ENCODE measurements at regions of chr1 and their contacts with region 1.

Region 1: GRCh38 chr1:174999216-174999925 is 376 bp upstream of the CACYBP start:
- DNase-seq: peak; percentile 100
- H3K4me3 Mint-ChIP-seq: no peak overlapping the region
- H3K27ac Mint-ChIP-seq: no peak overlapping the region
- H3K4me1 Mint-ChIP-seq: peaks cover 41% of the 10 kb centered on the region
- H3K27me3 Mint-ChIP-seq: no peaks in the 10 kb centered on the region
- CTCF ChIP-seq: no peak

Region 2: DNA sequence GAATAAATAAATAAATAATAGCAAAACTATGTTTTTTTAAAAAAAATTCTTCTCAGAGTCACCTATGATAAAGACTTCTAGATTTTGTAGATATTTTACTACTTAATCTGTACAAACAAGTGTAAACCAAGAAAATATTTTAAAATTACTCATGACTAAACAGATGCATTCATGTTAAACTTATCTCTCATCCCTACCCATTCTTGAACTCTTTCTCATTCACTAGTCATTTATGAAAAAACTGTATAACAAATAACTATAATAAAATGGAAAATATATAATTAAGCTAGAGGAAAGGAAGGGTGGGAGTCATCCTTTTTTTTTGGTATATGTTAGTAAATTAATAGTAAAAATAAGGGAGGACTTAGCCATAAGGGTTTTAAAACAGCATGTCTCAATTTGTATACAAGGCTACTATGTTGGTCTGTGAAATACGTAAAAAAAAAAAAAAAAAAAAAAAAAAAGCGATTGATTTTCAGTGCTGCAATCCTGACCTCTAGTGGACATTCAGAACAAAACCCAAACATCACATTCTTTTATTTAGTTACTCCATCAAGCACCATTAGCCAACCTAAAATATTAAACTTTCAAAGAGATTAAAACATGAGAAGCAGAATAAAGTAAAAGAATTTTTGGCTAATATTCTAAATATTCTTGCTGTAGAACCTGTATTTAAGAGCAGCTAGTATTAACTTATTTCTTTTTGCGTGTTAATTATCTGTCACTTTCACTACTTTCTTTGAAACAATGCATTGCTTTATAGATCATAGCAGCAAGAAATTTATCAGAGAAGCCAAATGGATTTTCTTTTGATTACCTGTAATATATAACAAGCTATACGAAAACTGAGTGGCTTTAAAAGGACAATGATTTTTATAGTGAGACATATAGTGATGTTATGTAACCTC is 255.5 kb before region 1 on chr1:
- CTCF ChIA-PET with region 1: interaction called, 4 read pairs
- POLR2A ChIA-PET with region 1: interaction called, 19 read pairs
- intact Hi-C with region 1: no loop called
- DNase-seq: peak; percentile 65
- H3K4me3 Mint-ChIP-seq: no peak overlapping the region
- H3K27ac Mint-ChIP-seq: no peak overlapping the region
- H3K4me1 Mint-ChIP-seq: no peaks in the 10 kb centered on the region
- H3K27me3 Mint-ChIP-seq: no peaks in the 10 kb centered on the region
- CTCF ChIP-seq: peak; percentile 76

Region 3: GRCh38 chr1:174786760-174787159 is 212.6 kb before region 1 on chr1:
- CTCF ChIA-PET with region 1: interaction called, 10 read pairs
- POLR2A ChIA-PET with region 1: interaction called, 6 read pairs
- intact Hi-C with region 1: no loop called
- DNase-seq: no peak
- H3K4me3 Mint-ChIP-seq: no peak overlapping the region
- H3K27ac Mint-ChIP-seq: no peak overlapping the region
- H3K4me1 Mint-ChIP-seq: peaks cover 7% of the 10 kb centered on the region
- H3K27me3 Mint-ChIP-seq: no peaks in the 10 kb centered on the region
- CTCF ChIP-seq: no peak

Region 4: DNA sequence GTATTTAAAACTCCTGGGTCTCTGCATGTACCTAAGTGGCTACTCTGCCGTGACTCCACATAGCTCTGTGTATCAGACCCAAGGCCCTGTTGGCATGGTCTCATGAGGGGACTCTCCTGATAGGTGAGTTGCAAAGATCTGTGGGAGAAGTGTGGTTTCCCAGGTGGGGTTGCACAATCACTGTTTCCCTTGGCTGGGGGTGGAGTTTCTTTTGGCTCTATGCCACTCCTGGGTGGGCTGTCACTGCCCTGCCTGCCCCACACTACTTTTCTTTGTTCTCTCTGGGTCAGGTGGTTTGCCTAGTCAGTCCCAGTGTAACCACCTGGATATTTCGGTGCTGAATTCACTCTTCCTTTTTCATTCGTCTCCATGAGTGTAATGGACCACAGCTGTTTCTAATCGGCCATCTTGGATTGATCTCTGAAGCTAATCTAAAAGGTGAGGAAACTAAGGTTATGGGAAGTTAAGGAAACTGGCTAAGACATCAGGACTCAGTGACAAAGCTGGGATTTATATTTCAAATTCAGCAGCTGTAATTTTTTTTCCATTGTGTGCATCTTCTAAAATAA is 96.8 kb before region 1 on chr1:
- CTCF ChIA-PET with region 1: no interaction called
- POLR2A ChIA-PET with region 1: no interaction called
- intact Hi-C with region 1: no loop called
- DNase-seq: peak; percentile 69
- H3K4me3 Mint-ChIP-seq: no peak overlapping the region
- H3K27ac Mint-ChIP-seq: no peak overlapping the region
- H3K4me1 Mint-ChIP-seq: no peaks in the 10 kb centered on the region
- H3K27me3 Mint-ChIP-seq: no peaks in the 10 kb centered on the region
- CTCF ChIP-seq: no peak

Region 5: DNA sequence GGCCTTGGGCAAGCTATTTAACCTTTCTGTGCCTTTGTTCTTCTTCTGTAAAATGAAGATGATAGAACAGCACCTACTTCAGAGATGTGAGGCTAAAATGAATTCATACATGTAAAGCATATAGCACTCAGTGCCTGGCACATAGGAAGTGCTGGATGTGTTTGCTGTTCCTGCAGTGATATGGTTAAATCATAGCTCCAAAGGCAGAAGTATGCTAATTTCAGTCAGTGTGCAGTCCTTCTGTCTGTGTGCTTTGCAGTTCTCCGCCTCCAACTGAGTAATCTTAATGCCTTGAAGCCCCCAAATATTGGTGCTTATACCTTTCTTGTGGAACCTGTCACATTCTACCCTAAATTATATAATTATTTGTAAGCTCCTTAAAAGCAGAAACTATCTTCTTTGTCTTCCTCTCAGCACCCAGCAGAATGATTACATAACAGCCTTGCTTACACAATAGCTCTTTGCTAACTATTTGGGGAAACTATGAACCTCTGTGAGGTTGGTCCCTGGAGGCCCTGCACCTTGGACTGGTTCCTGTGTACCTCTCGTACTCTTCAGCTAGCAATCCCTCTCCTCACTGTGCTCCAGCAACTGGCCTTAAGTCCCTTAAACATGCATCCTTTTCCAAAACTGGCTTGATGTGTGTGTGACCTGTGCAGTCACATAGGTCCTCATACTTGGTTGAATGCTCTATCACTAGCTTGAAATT is 56.7 kb before region 1 on chr1:
- CTCF ChIA-PET with region 1: interaction called, 5 read pairs
- POLR2A ChIA-PET with region 1: interaction called, 10 read pairs
- intact Hi-C with region 1: no loop called
- DNase-seq: peak; percentile 64
- H3K4me3 Mint-ChIP-seq: no peak overlapping the region
- H3K27ac Mint-ChIP-seq: no peak overlapping the region
- H3K4me1 Mint-ChIP-seq: peaks cover 8% of the 10 kb centered on the region
- H3K27me3 Mint-ChIP-seq: no peaks in the 10 kb centered on the region
- CTCF ChIP-seq: no peak

Region 6: DNA sequence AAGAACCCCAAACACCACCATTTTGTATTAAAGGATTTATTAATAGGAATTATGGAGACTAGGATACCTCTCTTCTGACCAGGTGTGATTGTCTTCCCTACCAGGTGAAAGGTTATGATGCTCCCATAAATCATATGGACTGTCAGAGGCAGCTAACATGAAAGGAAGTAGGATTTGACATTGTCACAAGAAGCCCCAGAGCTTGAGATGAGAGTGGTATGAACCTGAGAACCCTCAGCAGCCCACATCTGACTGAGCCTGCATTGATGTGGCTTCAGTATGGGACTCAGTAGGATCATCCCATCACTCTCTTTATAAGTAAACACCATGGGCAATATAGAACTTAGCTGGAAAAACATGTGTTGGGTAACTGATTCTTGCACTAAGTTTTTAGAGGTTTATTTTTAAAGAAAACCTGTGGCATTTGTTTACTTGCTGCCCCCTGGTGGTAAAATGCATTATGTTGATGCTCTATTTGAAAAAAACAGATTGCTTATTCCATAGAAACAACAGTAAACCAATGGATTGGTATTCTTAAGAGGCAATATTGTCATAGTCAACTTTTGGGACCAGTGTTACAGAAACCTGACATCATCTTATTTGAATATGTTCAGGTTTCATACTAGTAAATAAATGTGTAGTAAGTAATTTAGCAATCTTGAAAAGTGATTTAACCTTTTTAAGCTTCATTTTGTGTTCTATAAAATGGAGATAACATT is 16.2 kb before region 1 on chr1:
- CTCF ChIA-PET with region 1: interaction called, 80 read pairs
- POLR2A ChIA-PET with region 1: interaction called, 69 read pairs
- intact Hi-C with region 1: no loop called
- DNase-seq: peak; percentile 75
- H3K4me3 Mint-ChIP-seq: no peak overlapping the region
- H3K27ac Mint-ChIP-seq: no peak overlapping the region
- H3K4me1 Mint-ChIP-seq: no peaks in the 10 kb centered on the region
- H3K27me3 Mint-ChIP-seq: no peaks in the 10 kb centered on the region
- CTCF ChIP-seq: peak; percentile 57

Region 7: DNA sequence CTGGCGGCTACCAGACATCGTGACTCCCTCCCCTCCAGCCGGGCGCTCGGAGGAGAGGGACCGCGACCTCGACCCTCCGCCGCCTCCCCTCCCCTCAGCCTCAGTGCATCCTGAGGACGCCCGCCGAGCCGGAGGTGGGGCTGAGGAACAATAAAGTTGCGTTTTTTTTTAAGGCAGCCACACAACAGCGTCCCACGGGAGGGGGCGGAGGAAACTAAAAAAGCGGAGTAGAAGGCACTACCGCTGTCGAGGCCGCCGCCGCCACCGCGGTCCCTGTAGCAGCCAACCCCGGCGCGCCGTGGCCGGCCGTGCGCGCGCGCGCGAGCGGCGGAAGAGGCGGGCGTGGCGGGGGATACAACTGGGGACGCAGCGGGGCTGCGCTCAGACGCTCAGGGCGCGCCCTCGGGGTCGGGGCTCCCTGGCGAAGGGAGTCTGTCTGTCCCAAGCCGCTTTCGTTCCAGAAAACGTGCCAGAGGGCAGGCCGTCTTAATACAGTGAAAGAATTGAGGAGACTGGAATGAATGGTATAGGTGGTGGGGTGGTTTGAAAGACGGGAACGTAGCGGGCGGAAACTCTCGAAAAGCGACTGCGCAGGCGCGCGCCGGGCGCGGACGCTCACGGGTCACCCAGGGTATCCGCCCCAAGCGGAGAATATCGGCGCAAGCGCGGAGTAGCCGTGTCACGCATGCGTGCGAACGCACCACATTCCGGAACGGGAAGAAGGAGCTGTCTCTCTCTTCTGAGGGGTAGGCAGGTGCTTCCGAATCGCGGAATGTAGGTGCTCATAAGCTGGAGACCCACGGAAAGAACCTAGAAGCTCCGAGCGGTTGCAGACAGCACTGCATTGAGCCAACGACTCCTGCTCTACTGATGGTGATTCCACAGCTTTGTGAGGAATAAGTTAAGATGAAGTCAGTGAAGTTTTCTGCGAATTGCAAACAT is 1207.9 kb after region 1 on chr1 and contains the start of gene COP1:
- CTCF ChIA-PET with region 1: interaction called, 3 read pairs
- POLR2A ChIA-PET with region 1: no interaction called
- intact Hi-C with region 1: loop called (anchors 10 kb)
- DNase-seq: peak; percentile 98
- H3K4me3 Mint-ChIP-seq: peak within 1 kb of the TSS; percentile 83
- H3K27ac Mint-ChIP-seq: peak within 1 kb of the TSS; percentile 57
- H3K4me1 Mint-ChIP-seq: peaks cover 23% of the 10 kb centered on the region
- H3K27me3 Mint-ChIP-seq: no peaks in the 10 kb centered on the region
- CTCF ChIP-seq: no peak
- total RNA-seq, gene COP1: 41.6 and 47.0 TPM in 2 replicates

Measured in MCF 10A (cell line).